Posterior cingulate gyrus (tissue), 11 donors: ENCODE measurements at regions of chr9 and their contacts with region 1.

Region 1: GRCh38 chr9:119968836-119969707 is 599.8 kb upstream of the BRINP1 start:
- DNase-seq: peak; percentile 65 to 98 (median 88)

Region 2: DNA sequence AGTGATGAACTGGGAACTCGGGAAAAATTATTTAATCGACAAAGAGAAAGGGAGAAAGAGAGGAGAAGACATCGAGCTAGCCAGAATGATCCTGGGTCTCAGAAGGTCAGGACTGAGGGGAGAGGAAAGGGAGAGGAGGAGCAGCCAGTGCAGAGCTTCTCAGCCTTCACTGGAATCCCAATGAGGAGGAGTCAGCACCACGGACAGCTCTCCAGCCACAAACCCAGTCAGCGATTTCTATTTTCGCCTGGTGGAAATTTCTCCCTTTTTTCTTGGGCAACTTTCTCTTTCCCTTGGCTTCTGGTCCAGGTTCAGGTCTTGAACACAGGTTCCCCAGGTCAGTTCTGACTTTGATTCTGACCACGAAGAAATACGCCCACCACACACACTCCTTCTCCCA is 598.3 kb before region 1 on chr9:
- intact Hi-C with region 1: loop called (anchors 10 kb)
- DNase-seq: peak in 5 of 10 donors; percentile 27 to 79 (median 47)

Region 3: GRCh38 chr9:119556129-119556875 is 412.8 kb before region 1 on chr9:
- intact Hi-C with region 1: loop called (anchors 2 kb)
- DNase-seq: peak; percentile 67 to 96 (median 81)

Region 4: GRCh38 chr9:119667163-119667562 is 301.9 kb before region 1 on chr9:
- intact Hi-C with region 1: loop called (anchors 5 kb)
- DNase-seq: no peak

Region 5: GRCh38 chr9:119827126-119827525 is 141.9 kb before region 1 on chr9:
- intact Hi-C with region 1: no loop called
- DNase-seq: no peak

Region 6: GRCh38 chr9:119917164-119917563 is 51.9 kb before region 1 on chr9:
- intact Hi-C with region 1: no loop called
- DNase-seq: no peak

Region 7: DNA sequence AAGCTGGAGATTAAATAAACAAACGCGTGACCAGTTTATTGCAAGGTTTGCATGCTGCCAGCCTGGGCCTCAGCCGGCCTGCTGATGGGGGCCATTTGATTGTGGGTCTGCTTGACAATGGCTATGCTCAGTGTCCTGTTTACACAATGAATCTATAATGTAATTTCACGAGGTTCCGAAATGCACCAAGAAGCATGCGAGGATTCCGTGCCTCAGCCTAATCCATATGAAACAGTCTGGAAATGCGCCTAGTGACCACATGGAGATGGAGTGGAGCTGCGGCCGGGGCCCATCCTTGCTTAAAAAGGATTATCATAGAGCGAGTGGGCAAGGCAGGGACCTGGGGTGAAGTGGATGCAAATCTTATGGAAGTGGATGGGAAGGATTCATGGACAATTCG is 228.5 kb after region 1 on chr9:
- intact Hi-C with region 1: no loop called
- DNase-seq: peak in 1 of 10 donors; percentile 74

Region 8: DNA sequence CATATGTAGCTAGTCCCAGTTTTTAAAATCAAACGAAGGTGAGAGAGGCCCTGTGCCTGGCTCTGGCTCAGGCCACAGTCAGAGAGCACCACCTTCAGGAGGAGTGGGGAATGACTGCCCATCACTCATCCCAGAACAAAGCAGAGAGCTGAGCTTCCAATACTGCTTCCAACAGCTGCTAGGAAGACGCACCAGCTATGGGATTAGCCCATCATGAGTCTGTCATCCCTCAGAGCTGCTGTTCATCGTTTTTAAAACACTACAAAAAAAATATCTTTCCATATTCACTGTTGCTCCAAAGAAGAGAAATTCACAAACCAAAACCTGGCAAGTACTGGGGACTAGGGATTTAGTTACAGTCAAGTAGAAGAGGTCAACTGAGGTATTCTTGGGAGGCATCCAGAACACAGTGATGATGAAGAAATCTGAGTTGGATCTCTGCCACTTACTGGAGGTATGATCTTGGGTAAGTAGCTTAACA is 508.5 kb after region 1 on chr9:
- intact Hi-C with region 1: loop called (anchors 10 kb)
- DNase-seq: peak; percentile 42 to 95 (median 68)

Region 9: DNA sequence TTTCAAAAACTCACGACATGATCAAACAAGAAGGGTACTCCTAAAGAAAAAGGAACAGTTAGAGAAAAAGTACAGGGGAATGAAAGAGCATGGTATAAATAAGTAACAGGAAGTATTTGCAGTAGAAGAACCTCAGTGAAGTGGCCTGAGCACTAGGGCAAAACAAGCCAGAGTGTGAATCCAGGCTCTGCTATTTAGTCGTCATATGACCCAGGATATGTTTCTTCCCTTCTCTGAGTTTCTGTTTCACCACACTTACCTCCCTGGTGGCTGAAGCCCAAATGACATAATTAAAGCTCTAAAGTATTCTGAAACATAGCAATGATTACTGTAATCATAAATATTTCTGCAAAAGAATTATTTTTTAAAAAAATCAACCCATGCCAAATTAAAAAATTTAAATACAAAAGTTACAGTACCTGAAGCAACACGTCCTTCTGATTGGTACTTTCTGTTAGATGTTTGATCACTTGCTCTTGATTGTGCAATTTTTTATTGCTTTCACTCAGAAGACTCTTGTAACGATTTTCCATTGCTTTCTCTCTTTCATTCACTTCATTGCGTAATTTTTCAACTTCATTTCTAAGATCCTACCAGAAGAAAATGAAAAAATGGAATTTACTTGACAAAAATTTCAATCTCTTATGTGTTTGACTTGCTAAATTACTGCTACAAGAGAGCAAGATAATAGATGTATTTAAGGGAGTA is 522.0 kb after region 1 on chr9:
- intact Hi-C with region 1: no loop called
- DNase-seq: no peak